Activated CD8-positive, alpha-beta T cell treated with anti-CD3 and anti-CD28 coated beads for 36 hours (primary cell): ENCODE measurements at regions of chr15 and their contacts with region 1.

Region 1: GRCh38 chr15:66851226-66852071 is 149.4 kb downstream of the SMAD6 start:
- DNase-seq: peak; percentile 85
- ATAC-seq: peak; percentile 99
- H3K4me3 Mint-ChIP-seq: peak overlapping the region; percentile 7
- H3K27ac Mint-ChIP-seq: no peak overlapping the region
- H3K4me1 Mint-ChIP-seq: peaks cover 2% of the 10 kb centered on the region
- H3K27me3 Mint-ChIP-seq: peaks cover 7% of the 10 kb centered on the region
- CTCF ChIP-seq: peak; percentile 91

Region 2: GRCh38 chr15:66221126-66221525 is 630.3 kb before region 1 on chr15:
- CTCF ChIA-PET with region 1: no interaction called
- POLR2A ChIA-PET with region 1: no interaction called
- intact Hi-C with region 1: no loop called
- DNase-seq: no peak
- ATAC-seq: no peak
- H3K4me3 Mint-ChIP-seq: no peak overlapping the region
- H3K27ac Mint-ChIP-seq: no peak overlapping the region
- H3K4me1 Mint-ChIP-seq: no peaks in the 10 kb centered on the region
- H3K27me3 Mint-ChIP-seq: peaks cover 5% of the 10 kb centered on the region
- CTCF ChIP-seq: no peak

Region 3: DNA sequence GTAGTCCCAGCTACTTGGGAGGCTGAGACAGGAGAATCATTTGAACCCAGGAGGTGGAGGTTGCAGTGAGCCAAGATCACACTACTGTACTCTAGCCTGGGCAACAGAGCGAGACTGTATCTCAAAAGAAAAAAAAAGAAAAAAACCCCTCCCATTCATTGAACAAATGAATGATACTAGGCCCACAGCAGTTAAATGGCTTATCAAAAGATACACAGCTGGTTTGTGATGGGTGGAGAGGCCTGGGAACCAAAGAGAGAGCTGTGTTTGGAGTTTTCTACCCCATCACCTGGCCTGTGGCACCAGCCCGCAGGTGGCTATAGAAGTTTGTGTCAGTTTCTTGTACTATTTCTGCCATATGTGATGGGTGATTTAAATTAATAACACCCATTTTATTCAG is 242.6 kb before region 1 on chr15:
- CTCF ChIA-PET with region 1: interaction called, 52 read pairs
- POLR2A ChIA-PET with region 1: no interaction called
- intact Hi-C with region 1: no loop called
- DNase-seq: no peak
- ATAC-seq: no peak
- H3K4me3 Mint-ChIP-seq: no peak overlapping the region
- H3K27ac Mint-ChIP-seq: no peak overlapping the region
- H3K4me1 Mint-ChIP-seq: no peaks in the 10 kb centered on the region
- H3K27me3 Mint-ChIP-seq: no peaks in the 10 kb centered on the region
- CTCF ChIP-seq: no peak

Region 4: GRCh38 chr15:66628976-66629723 is 222.3 kb before region 1 on chr15:
- CTCF ChIA-PET with region 1: interaction called, 14 read pairs
- POLR2A ChIA-PET with region 1: no interaction called
- intact Hi-C with region 1: no loop called
- DNase-seq: no peak
- ATAC-seq: no peak
- H3K4me3 Mint-ChIP-seq: no peak overlapping the region
- H3K27ac Mint-ChIP-seq: no peak overlapping the region
- H3K4me1 Mint-ChIP-seq: no peaks in the 10 kb centered on the region
- H3K27me3 Mint-ChIP-seq: no peaks in the 10 kb centered on the region
- CTCF ChIP-seq: no peak

Region 5: GRCh38 chr15:66766282-66767230 is 84.9 kb before region 1 on chr15:
- CTCF ChIA-PET with region 1: interaction called, 12 read pairs
- POLR2A ChIA-PET with region 1: no interaction called
- intact Hi-C with region 1: no loop called
- DNase-seq: no peak
- ATAC-seq: no peak
- H3K4me3 Mint-ChIP-seq: no peak overlapping the region
- H3K27ac Mint-ChIP-seq: no peak overlapping the region
- H3K4me1 Mint-ChIP-seq: peaks cover 4% of the 10 kb centered on the region
- H3K27me3 Mint-ChIP-seq: peaks cover 28% of the 10 kb centered on the region
- CTCF ChIP-seq: no peak

Region 6: DNA sequence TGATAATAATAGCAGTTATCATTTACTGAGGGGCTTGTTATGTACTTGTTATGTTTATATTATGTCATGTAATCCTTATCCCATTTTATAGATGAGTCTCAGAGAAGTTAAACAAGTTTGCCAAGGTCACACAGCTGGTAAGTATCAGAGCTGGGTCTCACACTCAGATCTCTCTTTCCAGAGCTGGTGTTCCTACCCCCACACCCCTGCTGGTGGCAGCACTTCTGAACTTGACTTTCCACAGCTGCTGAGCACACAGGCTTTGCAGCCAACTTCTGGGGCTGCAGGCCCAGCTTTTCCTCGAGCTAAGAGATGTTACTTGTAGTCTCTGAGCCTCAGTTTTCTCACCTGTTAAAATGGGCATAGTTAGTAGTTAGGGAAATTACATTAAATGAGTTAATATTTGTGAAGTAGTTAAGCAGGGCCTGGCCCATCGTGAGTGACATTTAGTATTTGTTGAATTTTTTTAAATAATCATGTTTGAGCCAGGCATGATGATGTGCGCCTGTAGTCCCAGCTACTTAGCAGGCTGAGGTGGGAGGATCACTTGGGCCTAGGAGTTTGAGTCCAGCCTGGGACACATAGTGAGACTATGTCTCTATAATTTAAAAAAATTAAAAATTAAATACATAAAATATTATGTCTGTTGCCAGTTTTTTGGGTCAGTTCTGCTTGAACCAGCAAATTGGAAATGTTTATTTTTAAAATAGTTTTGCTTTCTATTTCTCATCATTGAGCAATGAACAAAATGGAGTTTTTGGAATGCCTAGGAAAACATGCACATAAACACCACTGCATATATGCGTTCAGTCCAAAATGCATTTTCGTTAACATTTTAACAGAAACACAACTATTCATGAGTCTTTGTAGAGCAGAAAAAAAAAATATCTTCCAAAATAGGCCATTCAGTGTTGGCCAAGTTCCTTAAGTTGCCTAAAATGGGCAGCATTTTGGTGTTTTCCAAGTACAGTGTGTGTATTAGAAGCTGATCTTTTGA is 62.1 kb before region 1 on chr15:
- CTCF ChIA-PET with region 1: interaction called, 12 read pairs
- POLR2A ChIA-PET with region 1: no interaction called
- intact Hi-C with region 1: no loop called
- DNase-seq: peak; percentile 23
- ATAC-seq: no peak
- H3K4me3 Mint-ChIP-seq: no peak overlapping the region
- H3K27ac Mint-ChIP-seq: no peak overlapping the region
- H3K4me1 Mint-ChIP-seq: no peaks in the 10 kb centered on the region
- H3K27me3 Mint-ChIP-seq: no peaks in the 10 kb centered on the region
- CTCF ChIP-seq: no peak

Region 7: DNA sequence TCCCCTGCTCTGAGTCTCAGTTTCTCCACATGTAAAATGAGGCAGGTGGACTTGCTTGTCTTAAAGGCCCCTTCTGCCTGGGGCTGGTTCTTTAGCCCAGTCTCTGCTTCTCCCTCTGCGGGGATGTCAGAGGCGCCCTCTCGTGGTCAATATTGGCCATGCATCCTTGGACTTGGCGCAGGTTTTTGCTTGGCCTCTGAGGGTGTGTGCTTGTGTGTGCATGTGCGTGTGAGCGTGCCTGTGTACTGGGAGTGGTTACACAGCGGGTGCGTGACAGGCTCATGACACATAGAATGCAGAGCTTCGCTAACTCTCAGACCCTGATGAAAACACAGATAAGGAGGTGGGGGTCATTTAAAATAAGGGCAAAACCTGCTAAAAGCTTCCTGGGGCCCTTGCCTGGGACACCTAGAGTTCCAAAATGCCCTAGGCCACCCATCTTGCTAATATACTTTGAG is 11.5 kb after region 1 on chr15:
- CTCF ChIA-PET with region 1: interaction called, 26 read pairs
- POLR2A ChIA-PET with region 1: interaction called, 4 read pairs
- intact Hi-C with region 1: no loop called
- DNase-seq: peak; percentile 88
- ATAC-seq: peak; percentile 98
- H3K4me3 Mint-ChIP-seq: no peak overlapping the region
- H3K27ac Mint-ChIP-seq: no peak overlapping the region
- H3K4me1 Mint-ChIP-seq: no peaks in the 10 kb centered on the region
- H3K27me3 Mint-ChIP-seq: peaks cover 16% of the 10 kb centered on the region
- CTCF ChIP-seq: peak; percentile 83

Region 8: DNA sequence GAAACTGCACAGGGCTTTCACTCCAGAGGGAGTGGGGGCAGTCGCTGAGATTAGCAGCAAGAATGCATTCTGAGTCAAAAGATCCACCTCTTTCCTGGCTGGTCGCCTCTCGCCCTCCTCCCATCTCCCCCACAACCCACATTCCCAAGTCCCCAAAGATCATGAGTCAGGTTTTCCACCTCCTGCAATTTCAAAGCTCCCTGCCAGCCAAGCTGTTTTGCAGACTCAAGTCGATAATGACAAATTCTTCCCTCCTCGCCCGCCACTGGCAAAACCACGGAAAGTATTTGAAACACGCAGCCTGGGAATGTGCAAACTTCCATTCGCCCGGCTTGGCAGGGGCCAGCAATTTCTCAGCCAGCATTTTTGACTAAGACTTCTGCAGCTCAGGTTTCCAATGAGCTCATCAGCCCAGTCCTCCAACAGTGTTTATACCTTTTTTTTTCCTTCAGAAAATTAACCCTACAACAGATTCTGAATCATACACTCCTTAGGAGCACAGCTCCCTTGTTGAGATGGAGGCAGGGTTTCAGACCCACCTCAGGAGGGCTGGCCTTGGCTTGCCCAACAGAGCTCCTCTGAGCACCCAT is 32.0 kb after region 1 on chr15:
- CTCF ChIA-PET with region 1: no interaction called
- POLR2A ChIA-PET with region 1: no interaction called
- intact Hi-C with region 1: no loop called
- DNase-seq: no peak
- ATAC-seq: no peak
- H3K4me3 Mint-ChIP-seq: no peak overlapping the region
- H3K27ac Mint-ChIP-seq: no peak overlapping the region
- H3K4me1 Mint-ChIP-seq: peaks cover 2% of the 10 kb centered on the region
- H3K27me3 Mint-ChIP-seq: no peaks in the 10 kb centered on the region
- CTCF ChIP-seq: no peak